Transverse colon (tissue), 4 donors: ENCODE measurements at regions of chr9 and their contacts with region 1.

Region 1: DNA sequence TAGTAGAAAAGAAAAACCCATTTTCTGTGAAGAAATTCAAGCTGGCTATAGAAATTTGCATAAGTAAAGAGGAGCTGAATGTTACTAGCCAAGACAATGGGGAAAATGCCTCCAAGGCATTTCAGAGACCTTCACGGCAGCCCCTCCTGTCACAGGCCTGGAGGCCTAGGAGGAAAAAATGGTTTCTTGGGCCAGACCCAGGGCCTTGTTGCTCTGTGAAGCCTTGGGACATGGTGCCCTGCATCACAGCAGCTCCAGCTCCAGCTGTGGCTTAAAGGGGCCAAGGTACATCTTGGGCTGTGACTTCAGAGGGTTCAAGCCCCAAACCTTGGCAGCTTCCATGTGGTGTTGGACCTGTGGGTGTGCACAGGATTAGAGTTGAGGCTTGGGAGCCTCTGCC is 130.0 kb upstream of the DMRTA1 start:
- DNase-seq: no peak
- H3K4me3 ChIP-seq: no peak overlapping the region
- H3K27ac ChIP-seq: no peak overlapping the region
- H3K4me1 ChIP-seq: no peaks in the 10 kb centered on the region
- H3K27me3 ChIP-seq: no peaks in the 10 kb centered on the region
- CTCF ChIP-seq: no peak
- EP300 ChIP-seq: no peak
- POLR2A ChIP-seq: no peak

Region 2: GRCh38 chr9:22446950-22447617 is 130.4 kb after region 1 on chr9:
- in situ Hi-C with region 1: loop called in 2 of 4 experiments (anchors 10 kb)
- intact Hi-C with region 1: no loop called
- DNase-seq: peak; percentile 65
- H3K4me3 ChIP-seq: peak overlapping the region; percentile 51 to 92 (median 74)
- H3K27ac ChIP-seq: peak overlapping the region; percentile 84 to 89 (median 86)
- H3K4me1 ChIP-seq: peaks cover 0 to 22% (median 6%) of the 10 kb centered on the region in 4 donors
- H3K27me3 ChIP-seq: peaks cover 53% of the 10 kb centered on the region
- CTCF ChIP-seq: peak in 1 of 5 experiments; percentile 10
- EP300 ChIP-seq: no peak
- POLR2A ChIP-seq: peak; percentile 18

Region 3: GRCh38 chr9:22452415-22453010 is 135.9 kb after region 1 on chr9:
- in situ Hi-C with region 1: loop called in 2 of 4 experiments (anchors 10 kb)
- intact Hi-C with region 1: no loop called
- DNase-seq: peak; percentile 54
- H3K4me3 ChIP-seq: no peak overlapping the region
- H3K27ac ChIP-seq: no peak overlapping the region
- H3K4me1 ChIP-seq: peaks cover 0 to 12% (median 2%) of the 10 kb centered on the region in 4 donors
- H3K27me3 ChIP-seq: peaks cover 4% of the 10 kb centered on the region
- CTCF ChIP-seq: peak; percentile 72 to 85 (median 82)
- EP300 ChIP-seq: no peak
- POLR2A ChIP-seq: no peak